MCF 10A (cell line): ENCODE measurements at regions of chr11 and their contacts with region 1.

Region 1: DNA sequence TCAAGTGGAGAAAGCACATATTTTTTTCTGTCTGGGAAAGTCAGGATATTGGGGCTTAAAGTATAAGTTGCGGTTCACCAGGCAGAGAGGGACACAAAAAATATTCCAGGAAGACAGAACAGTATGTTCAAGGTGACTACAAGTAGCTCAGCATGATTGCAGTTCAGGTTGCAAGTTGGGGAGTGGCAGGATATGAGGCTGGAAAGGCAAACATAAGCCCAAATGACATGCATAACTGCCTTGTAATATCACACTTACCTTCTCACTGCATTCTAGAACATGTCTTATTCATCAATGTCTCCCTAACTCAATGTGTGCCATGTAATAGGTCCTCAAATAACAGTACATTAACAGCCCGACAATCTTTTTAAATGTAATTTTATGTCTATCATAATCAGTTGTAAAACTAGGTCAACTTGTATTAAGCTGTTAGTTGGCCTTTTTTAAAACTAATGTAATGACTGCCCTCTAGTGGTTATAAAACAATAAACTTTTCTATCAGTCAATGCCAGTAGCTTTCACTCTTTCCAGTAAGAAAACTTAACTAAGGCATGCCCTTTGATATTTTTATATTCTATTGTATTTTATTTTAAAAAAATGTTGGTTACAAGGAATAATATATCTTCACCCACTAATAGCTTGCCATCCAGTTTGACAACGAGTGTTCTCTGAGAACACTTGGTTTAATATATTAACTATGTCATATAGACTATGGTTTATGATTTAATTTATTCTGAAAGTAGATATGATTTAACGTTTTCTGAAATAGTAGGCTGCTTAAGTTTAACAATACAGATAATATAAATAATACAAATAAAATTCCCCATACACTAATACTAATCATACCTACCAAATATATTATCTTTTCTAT is 39.4 kb upstream of the CFAP300 start:
- DNase-seq: peak; percentile 70
- H3K4me3 Mint-ChIP-seq: no peak overlapping the region
- H3K27ac Mint-ChIP-seq: peak overlapping the region; percentile 90
- H3K4me1 Mint-ChIP-seq: peaks cover 31% of the 10 kb centered on the region
- H3K27me3 Mint-ChIP-seq: no peaks in the 10 kb centered on the region
- CTCF ChIP-seq: peak; percentile 44

Region 2: DNA sequence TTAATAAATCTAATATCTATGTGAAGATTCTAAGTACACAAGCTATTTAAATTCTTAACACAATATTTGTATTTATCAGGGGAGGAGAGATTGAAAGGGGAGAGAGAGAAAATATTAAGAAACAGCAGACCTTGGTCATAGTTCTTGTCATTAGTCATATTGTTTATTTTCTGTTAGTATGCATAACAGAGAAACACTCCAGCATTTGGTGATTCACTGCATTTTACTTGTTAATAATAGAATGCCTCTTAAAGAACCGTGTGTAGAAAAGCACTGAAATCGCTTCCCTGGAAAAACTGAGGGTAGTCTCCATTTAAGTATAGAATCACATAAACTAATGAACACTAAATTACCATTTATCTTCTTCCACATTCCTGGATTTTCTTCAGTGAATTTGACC is 301.3 kb before region 1 on chr11:
- CTCF ChIA-PET with region 1: no interaction called
- POLR2A ChIA-PET with region 1: no interaction called
- intact Hi-C with region 1: no loop called
- DNase-seq: peak; percentile 51
- H3K4me3 Mint-ChIP-seq: no peak overlapping the region
- H3K27ac Mint-ChIP-seq: peak overlapping the region; percentile 87
- H3K4me1 Mint-ChIP-seq: peaks cover 9% of the 10 kb centered on the region
- H3K27me3 Mint-ChIP-seq: no peaks in the 10 kb centered on the region
- CTCF ChIP-seq: no peak

Region 3: DNA sequence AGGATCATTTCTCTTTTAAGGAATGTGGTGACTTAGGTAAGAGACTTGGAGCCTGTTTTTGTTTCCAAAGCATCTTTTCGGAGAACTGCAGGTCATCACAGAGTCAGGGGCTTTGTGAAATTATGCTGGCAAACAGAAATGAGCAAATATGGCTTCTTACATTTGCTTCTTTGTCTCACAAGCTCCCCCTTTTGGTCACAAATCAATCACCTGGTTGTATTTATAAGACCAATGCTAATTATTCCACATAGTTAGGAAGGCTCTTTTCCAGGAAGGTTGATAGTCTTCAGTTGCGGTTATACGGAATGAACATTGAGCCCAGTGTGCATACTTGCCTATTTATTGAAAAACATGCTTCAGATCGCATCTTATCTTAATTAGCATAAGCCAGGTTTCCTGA is 127.6 kb before region 1 on chr11:
- CTCF ChIA-PET with region 1: interaction called, 23 read pairs
- POLR2A ChIA-PET with region 1: no interaction called
- intact Hi-C with region 1: no loop called
- DNase-seq: peak; percentile 66
- H3K4me3 Mint-ChIP-seq: no peak overlapping the region
- H3K27ac Mint-ChIP-seq: no peak overlapping the region
- H3K4me1 Mint-ChIP-seq: no peaks in the 10 kb centered on the region
- H3K27me3 Mint-ChIP-seq: no peaks in the 10 kb centered on the region
- CTCF ChIP-seq: peak; percentile 33

Region 4: DNA sequence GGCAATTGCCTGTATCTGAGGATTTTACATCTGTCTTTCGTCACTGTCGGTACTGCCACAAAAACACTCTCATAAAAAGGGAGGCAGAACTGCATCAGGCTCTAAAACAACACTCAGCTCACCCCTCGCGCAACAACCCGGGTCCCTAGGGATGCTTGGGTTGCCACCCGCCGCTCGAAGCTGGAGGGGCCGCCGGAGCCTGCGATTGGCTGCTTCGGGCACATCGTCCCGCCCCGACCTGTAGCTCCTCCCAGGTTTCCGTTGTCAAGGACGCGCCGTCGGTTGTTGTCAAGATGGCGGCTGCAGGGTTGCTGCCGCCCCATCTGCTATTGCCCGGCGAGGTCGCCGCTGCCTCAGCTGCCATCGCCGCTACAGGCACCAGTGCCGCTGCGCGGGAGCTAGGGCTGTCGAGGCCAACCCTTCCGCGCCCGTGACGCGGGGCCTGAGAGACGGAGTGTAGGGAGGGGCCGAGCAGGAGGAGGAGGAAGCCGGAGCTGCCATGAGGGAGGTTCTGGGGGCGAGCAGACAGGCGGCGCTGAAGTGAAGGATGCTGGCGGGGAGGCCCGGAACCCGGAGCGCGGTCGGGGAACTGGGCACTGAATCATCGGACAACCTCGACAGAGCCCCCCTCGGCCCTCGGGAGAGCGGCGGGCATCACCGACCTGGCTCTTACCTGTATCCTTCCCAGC is 92.9 kb before region 1 on chr11 and contains the start of gene CEP126:
- CTCF ChIA-PET with region 1: interaction called, 24 read pairs
- POLR2A ChIA-PET with region 1: interaction called, 10 read pairs
- intact Hi-C with region 1: loop called (anchors 2 kb)
- DNase-seq: peak; percentile 92
- H3K4me3 Mint-ChIP-seq: peak within 1 kb of the TSS; percentile 96
- H3K27ac Mint-ChIP-seq: peak within 1 kb of the TSS; percentile 98
- H3K4me1 Mint-ChIP-seq: peaks cover 33% of the 10 kb centered on the region
- H3K27me3 Mint-ChIP-seq: no peaks in the 10 kb centered on the region
- CTCF ChIP-seq: peak; percentile 27
- total RNA-seq, gene CEP126: 3.1 and 4.3 TPM in 2 replicates

Region 5: GRCh38 chr11:101996111-101996510 is 11.7 kb before region 1 on chr11:
- CTCF ChIA-PET with region 1: interaction called, 13 read pairs
- POLR2A ChIA-PET with region 1: no interaction called
- intact Hi-C with region 1: no loop called
- DNase-seq: no peak
- H3K4me3 Mint-ChIP-seq: no peak overlapping the region
- H3K27ac Mint-ChIP-seq: no peak overlapping the region
- H3K4me1 Mint-ChIP-seq: no peaks in the 10 kb centered on the region
- H3K27me3 Mint-ChIP-seq: no peaks in the 10 kb centered on the region
- CTCF ChIP-seq: no peak

Region 6: GRCh38 chr11:102495161-102496042 is 487.6 kb after region 1 on chr11:
- CTCF ChIA-PET with region 1: no interaction called
- POLR2A ChIA-PET with region 1: no interaction called
- intact Hi-C with region 1: no loop called
- DNase-seq: peak; percentile 93
- H3K4me3 Mint-ChIP-seq: no peak overlapping the region
- H3K27ac Mint-ChIP-seq: no peak overlapping the region
- H3K4me1 Mint-ChIP-seq: peaks cover 17% of the 10 kb centered on the region
- H3K27me3 Mint-ChIP-seq: no peaks in the 10 kb centered on the region
- CTCF ChIP-seq: no peak